ENCODE measurements at regions of chr14 and their contacts with region 1.

Region 1: GRCh38 chr14:32083789-32084188 is 6.7 kb downstream of the ARHGAP5 start:
- DNase-seq: no peak
- ATAC-seq: no peak
- H3K4me3 ChIP-seq: no peak overlapping the region
- H3K27ac ChIP-seq: no peak overlapping the region
- H3K4me1 ChIP-seq: no peaks in the 10 kb centered on the region; a peak in 3 of 5 replicates
- H3K27me3 ChIP-seq: no peaks in the 10 kb centered on the region
- CTCF ChIP-seq: no peak
- EP300 ChIP-seq: no peak
- POLR2A ChIP-seq: no peak
- RAD21 ChIP-seq: no peak

Region 2: GRCh38 chr14:32047791-32048190 is 36.0 kb before region 1 on chr14:
- CTCF ChIA-PET with region 1: no interaction called
- POLR2A ChIA-PET with region 1: no interaction called
- in situ Hi-C with region 1: no loop called
- intact Hi-C with region 1: no loop called
- DNase-seq: no peak
- ATAC-seq: no peak
- H3K4me3 ChIP-seq: no peak overlapping the region
- H3K27ac ChIP-seq: no peak overlapping the region
- H3K4me1 ChIP-seq: no peaks in the 10 kb centered on the region
- H3K27me3 ChIP-seq: peaks cover 0 to 7% of the 10 kb centered on the region in 2 experiments; a peak in 1 of 5 replicates
- CTCF ChIP-seq: no peak
- EP300 ChIP-seq: no peak
- POLR2A ChIP-seq: no peak
- RAD21 ChIP-seq: no peak

Region 3: DNA sequence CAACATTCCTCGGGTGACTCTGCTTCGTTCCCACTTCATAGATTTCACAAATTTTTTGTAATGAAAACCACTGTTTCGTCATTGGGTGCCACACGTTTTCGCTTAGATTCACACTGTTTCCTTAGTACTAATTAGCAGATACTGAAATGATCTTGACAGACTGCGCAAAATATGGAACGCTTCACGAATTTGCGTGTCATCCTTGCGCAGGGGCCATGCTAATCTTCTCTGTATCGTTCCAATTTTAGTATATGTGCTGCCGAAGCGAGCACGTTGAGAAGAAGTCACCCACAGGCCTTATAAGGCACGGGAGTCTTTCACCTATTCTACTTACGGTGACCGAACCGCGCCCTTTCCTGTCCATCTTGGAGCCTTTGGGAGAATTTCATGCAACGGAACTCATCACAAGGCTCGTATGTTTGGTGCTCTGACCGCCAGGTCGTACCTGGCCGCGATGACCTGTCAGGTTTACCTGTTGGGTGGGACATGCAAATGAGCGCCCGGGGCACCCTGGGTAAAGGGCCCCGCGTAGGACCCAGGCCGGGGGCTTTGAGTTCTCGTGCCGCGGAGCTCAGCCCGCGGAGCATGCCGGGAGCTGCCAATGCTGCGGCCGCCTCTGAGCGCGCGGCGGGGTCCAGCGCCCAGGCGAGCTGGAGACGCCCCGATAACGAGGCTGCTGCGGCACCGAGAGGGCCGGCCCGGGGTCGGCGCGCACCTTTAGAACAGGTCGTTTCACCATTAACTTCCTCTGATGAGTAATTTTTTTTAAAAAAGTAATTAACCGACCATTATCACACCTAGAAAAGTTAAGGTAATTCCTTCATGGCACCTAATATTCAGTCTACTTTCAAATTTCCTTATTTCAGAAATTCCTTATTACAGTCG is 119.5 kb after region 1 on chr14 and contains the start of gene RNU6-8:
- CTCF ChIA-PET with region 1: no interaction called
- POLR2A ChIA-PET with region 1: no interaction called
- in situ Hi-C with region 1: loop called (anchors 5 kb)
- intact Hi-C with region 1: no loop called
- DNase-seq: peak; percentile 79 to 87 (median 83)
- ATAC-seq: peak; percentile 92
- H3K4me3 ChIP-seq: peak within 1 kb of the TSS; percentile 62
- H3K27ac ChIP-seq: peak within 1 kb of the TSS; percentile 89
- H3K4me1 ChIP-seq: peaks cover 3 to 8% of the 10 kb centered on the region in 2 experiments; a peak in 3 of 5 replicates
- H3K27me3 ChIP-seq: no peaks in the 10 kb centered on the region
- CTCF ChIP-seq: no peak
- EP300 ChIP-seq: no peak
- POLR2A ChIP-seq: peak; percentile 54; the same call in 1 of the 2 replicates
- RAD21 ChIP-seq: no peak; a peak in 1 of 4 replicates
- polyA plus RNA-seq, gene RNU6-8: not detected

Region 4: GRCh38 chr14:32354713-32355112 is 270.9 kb after region 1 on chr14:
- CTCF ChIA-PET with region 1: no interaction called
- POLR2A ChIA-PET with region 1: no interaction called
- in situ Hi-C with region 1: no loop called
- intact Hi-C with region 1: no loop called
- DNase-seq: no peak
- ATAC-seq: no peak
- H3K4me3 ChIP-seq: no peak overlapping the region
- H3K27ac ChIP-seq: no peak overlapping the region
- H3K4me1 ChIP-seq: no peaks in the 10 kb centered on the region
- H3K27me3 ChIP-seq: no peaks in the 10 kb centered on the region; a peak in 1 of 5 replicates
- CTCF ChIP-seq: no peak
- EP300 ChIP-seq: no peak
- POLR2A ChIP-seq: no peak
- RAD21 ChIP-seq: no peak